ENCODE measurements at regions of chr22 and their contacts with region 1.

Region 1: DNA sequence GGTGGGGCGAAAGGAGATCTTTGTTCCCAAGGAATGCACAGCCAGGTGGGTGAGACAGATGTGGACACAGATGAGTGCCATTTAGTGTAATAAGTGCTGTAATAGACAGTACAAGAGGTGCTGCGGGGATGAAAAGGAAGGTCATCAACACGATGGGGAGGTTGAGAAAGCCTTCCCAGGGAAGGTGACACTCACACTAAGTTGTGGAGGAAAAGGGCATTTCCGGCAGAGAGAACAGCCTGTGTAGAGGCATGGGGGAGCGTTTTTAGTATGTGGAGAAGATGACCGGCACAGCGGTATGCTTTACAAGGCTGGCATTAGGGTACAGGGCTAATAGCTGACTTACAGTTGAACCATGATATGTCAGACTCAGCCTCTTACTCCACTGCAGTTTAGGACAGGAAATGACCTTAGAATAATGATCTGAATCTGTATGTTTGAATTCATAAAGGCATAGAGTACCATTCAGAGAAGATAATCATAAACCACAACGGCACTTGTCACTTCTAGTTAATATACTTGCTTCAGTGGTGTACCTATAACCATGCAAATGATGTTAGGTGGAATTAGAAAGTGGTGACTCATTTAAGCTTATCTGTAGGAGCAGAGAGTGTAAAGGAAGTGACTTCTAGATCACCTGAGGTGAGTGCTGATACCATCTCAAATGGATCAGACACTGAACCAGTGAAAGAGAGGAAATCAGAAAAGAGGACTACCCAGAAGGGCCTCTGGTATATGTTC is 60.6 kb downstream of the FAM83F start:
- DNase-seq: peak; percentile 44
- H3K4me3 Mint-ChIP-seq: peak overlapping the region; percentile 77
- H3K27ac Mint-ChIP-seq: peak overlapping the region; percentile 97
- H3K4me1 Mint-ChIP-seq: peaks cover 78% of the 10 kb centered on the region
- H3K27me3 Mint-ChIP-seq: no peaks in the 10 kb centered on the region

Region 2: DNA sequence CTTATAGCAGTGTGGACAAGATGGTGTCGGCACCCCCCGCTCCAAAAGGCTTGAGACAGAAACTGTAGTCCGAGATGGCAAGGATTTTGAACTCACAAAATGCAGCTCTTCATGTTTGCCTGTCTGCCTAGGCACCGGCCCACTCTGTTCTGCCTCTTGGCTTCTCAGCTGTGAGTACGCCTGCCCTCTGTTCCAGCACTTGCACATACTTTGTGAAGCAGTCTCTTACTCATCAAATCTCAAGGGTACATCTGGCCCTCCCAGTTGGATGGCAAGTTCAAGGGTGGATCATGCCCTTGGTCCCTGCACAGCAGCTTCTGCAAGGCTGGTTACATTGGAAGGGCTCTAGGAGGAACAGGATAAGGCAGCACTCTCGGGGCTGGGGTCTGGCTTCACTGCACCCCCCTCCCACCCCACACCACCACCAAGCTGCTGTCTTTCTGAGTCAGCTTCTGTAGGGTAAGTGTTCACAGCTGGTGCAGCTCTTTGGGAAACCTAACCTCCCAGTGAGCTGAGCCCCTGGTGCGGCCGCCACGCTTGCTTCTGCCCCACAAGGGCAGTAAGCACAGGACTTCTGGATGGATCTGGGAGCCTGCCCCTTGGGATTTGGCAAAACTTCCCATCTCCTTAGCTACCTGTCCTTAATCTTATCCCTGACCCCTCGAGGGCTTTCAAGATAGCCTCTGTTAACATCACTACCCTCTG is 23.4 kb before region 1 on chr22:
- CTCF ChIA-PET with region 1: no interaction called
- POLR2A ChIA-PET with region 1: no interaction called
- intact Hi-C with region 1: no loop called
- DNase-seq: no peak
- H3K4me3 Mint-ChIP-seq: no peak overlapping the region
- H3K27ac Mint-ChIP-seq: no peak overlapping the region
- H3K4me1 Mint-ChIP-seq: no peaks in the 10 kb centered on the region
- H3K27me3 Mint-ChIP-seq: no peaks in the 10 kb centered on the region

Region 3: GRCh38 chr22:40044102-40044869 is 11.0 kb before region 1 on chr22:
- CTCF ChIA-PET with region 1: interaction called, 15 read pairs
- POLR2A ChIA-PET with region 1: interaction called, 33 read pairs
- intact Hi-C with region 1: loop called (anchors 1 kb)
- DNase-seq: peak; percentile 99
- H3K4me3 Mint-ChIP-seq: peak overlapping the region; percentile 93
- H3K27ac Mint-ChIP-seq: peak overlapping the region; percentile 99
- H3K4me1 Mint-ChIP-seq: peaks cover 27% of the 10 kb centered on the region
- H3K27me3 Mint-ChIP-seq: peaks cover 6% of the 10 kb centered on the region

Region 4: GRCh38 chr22:40137132-40137531 is 81.8 kb after region 1 on chr22:
- CTCF ChIA-PET with region 1: no interaction called
- POLR2A ChIA-PET with region 1: no interaction called
- intact Hi-C with region 1: no loop called
- DNase-seq: no peak
- H3K4me3 Mint-ChIP-seq: no peak overlapping the region
- H3K27ac Mint-ChIP-seq: no peak overlapping the region
- H3K4me1 Mint-ChIP-seq: peaks cover 5% of the 10 kb centered on the region
- H3K27me3 Mint-ChIP-seq: no peaks in the 10 kb centered on the region

Region 5: GRCh38 chr22:40196628-40197360 is 141.5 kb after region 1 on chr22:
- CTCF ChIA-PET with region 1: interaction called, 7 read pairs
- POLR2A ChIA-PET with region 1: interaction called, 5 read pairs
- intact Hi-C with region 1: loop called (anchors 5 kb)
- DNase-seq: peak; percentile 78
- H3K4me3 Mint-ChIP-seq: peak overlapping the region; percentile 53
- H3K27ac Mint-ChIP-seq: peak overlapping the region; percentile 90
- H3K4me1 Mint-ChIP-seq: peaks cover 78% of the 10 kb centered on the region
- H3K27me3 Mint-ChIP-seq: no peaks in the 10 kb centered on the region

Region 6: GRCh38 chr22:40238425-40239344 is 183.4 kb after region 1 on chr22:
- CTCF ChIA-PET with region 1: no interaction called
- POLR2A ChIA-PET with region 1: interaction called, 3 read pairs
- intact Hi-C with region 1: loop called (anchors 2 kb)
- DNase-seq: peak; percentile 59
- H3K4me3 Mint-ChIP-seq: peak overlapping the region; percentile 2
- H3K27ac Mint-ChIP-seq: peak overlapping the region; percentile 59
- H3K4me1 Mint-ChIP-seq: peaks cover 81% of the 10 kb centered on the region
- H3K27me3 Mint-ChIP-seq: no peaks in the 10 kb centered on the region

Region 7: GRCh38 chr22:40258451-40259046 is 203.2 kb after region 1 on chr22:
- CTCF ChIA-PET with region 1: interaction called, 4 read pairs
- POLR2A ChIA-PET with region 1: no interaction called
- intact Hi-C with region 1: loop called (anchors 5 kb)
- DNase-seq: peak; percentile 31
- H3K4me3 Mint-ChIP-seq: no peak overlapping the region
- H3K27ac Mint-ChIP-seq: peak overlapping the region; percentile 75
- H3K4me1 Mint-ChIP-seq: peaks cover 67% of the 10 kb centered on the region
- H3K27me3 Mint-ChIP-seq: no peaks in the 10 kb centered on the region

Region 8: DNA sequence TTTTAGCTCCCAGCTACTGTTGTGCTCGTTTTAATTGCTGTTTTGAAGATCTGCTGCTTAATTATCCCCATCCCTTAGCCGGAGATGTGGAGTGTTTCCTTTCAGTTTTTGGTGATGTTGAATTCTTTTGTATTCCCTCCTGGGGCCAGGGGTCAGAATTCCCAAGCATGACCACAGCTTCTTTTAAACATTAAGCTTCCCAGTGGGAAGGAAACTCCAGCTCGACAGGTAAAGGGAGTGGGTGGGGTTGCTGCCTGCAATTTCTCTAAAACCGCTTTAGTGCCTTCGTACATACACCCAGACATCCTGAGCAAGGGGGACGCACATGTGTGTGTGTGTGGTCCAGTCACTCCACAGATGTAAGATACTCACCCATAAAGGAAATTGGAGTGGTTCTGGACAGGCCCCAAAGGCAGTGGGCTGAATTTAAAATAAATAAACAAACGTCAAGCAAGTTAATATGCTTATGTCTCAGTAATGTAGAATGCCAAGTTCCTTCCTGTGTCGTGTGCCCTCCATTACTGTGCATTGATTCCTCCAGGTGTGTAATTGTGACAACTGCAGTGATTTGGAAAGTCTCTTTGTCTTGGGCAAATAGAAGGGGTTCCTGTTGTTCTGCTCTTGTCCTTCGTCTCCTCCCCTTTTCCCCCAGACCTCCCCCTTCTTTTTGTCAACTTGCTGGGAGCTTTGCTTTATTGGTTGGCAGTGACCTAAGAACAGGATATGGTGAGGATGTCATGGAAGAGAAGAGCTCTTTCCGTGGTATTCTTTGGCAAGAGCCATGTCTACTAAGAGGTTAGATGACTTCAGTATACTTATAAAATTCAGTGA is 271.8 kb after region 1 on chr22:
- CTCF ChIA-PET with region 1: interaction called, 3 read pairs
- POLR2A ChIA-PET with region 1: interaction called, 3 read pairs
- intact Hi-C with region 1: loop called (anchors 5 kb)
- DNase-seq: no peak
- H3K4me3 Mint-ChIP-seq: no peak overlapping the region
- H3K27ac Mint-ChIP-seq: peak overlapping the region; percentile 77
- H3K4me1 Mint-ChIP-seq: peaks cover 94% of the 10 kb centered on the region
- H3K27me3 Mint-ChIP-seq: no peaks in the 10 kb centered on the region

Measured in activated CD4-positive, alpha-beta memory T cell treated with anti-CD3 and anti-CD28 coated beads for 36 hours (primary cell).